Activated CD8-positive, alpha-beta T cell treated with anti-CD3 and anti-CD28 coated beads for 36 hours (primary cell): ENCODE measurements at regions of chr11 and their contacts with region 1.

Region 1: GRCh38 chr11:10355257-10355661 is 50.4 kb downstream of the ADM start:
- DNase-seq: no peak
- ATAC-seq: no peak
- H3K4me3 Mint-ChIP-seq: no peak overlapping the region
- H3K27ac Mint-ChIP-seq: no peak overlapping the region
- H3K4me1 Mint-ChIP-seq: peaks cover 3% of the 10 kb centered on the region
- H3K27me3 Mint-ChIP-seq: peaks cover 22% of the 10 kb centered on the region
- CTCF ChIP-seq: no peak

Region 2: GRCh38 chr11:10366568-10367370 is 11.5 kb after region 1 on chr11:
- CTCF ChIA-PET with region 1: interaction called, 17 read pairs
- POLR2A ChIA-PET with region 1: interaction called, 3 read pairs
- intact Hi-C with region 1: no loop called
- DNase-seq: peak; percentile 88
- ATAC-seq: peak; percentile 96
- H3K4me3 Mint-ChIP-seq: no peak overlapping the region
- H3K27ac Mint-ChIP-seq: peak overlapping the region; percentile 39
- H3K4me1 Mint-ChIP-seq: peaks cover 5% of the 10 kb centered on the region
- H3K27me3 Mint-ChIP-seq: peaks cover 10% of the 10 kb centered on the region
- CTCF ChIP-seq: peak; percentile 90

Region 3: DNA sequence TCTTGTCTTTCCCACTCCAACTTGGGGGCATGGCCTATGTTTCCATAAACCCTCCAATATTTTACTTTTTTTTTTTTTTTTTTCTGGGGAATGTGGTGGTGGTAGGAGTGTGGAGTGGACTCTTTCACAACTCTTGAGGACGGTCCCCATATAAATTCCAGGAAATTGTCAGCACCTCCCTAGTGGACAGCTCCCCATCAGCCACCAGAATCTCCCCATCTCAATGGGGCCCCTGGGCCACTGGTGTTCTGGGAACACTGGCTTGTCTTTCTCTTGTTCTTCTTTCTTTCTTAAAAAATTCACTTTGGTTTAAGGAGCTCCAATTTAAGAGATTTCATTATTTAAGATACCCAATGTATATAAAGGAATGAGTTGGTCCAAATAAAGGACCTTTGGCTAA is 23.8 kb after region 1 on chr11:
- CTCF ChIA-PET with region 1: no interaction called
- POLR2A ChIA-PET with region 1: no interaction called
- intact Hi-C with region 1: no loop called
- DNase-seq: no peak
- ATAC-seq: no peak
- H3K4me3 Mint-ChIP-seq: no peak overlapping the region
- H3K27ac Mint-ChIP-seq: no peak overlapping the region
- H3K4me1 Mint-ChIP-seq: no peaks in the 10 kb centered on the region
- H3K27me3 Mint-ChIP-seq: peaks cover 11% of the 10 kb centered on the region
- CTCF ChIP-seq: no peak